HEK293 (cell line): ENCODE measurements at regions of chr9 and their contacts with region 1.

Region 1: GRCh38 chr9:12719431-12719830 is 26.2 kb downstream of the TYRP1 start:
- H3K4me3 ChIP-seq: no peak overlapping the region
- H3K27ac ChIP-seq: no peak overlapping the region
- H3K4me1 ChIP-seq: no peaks in the 10 kb centered on the region
- CTCF ChIP-seq: no peak

Region 2: DNA sequence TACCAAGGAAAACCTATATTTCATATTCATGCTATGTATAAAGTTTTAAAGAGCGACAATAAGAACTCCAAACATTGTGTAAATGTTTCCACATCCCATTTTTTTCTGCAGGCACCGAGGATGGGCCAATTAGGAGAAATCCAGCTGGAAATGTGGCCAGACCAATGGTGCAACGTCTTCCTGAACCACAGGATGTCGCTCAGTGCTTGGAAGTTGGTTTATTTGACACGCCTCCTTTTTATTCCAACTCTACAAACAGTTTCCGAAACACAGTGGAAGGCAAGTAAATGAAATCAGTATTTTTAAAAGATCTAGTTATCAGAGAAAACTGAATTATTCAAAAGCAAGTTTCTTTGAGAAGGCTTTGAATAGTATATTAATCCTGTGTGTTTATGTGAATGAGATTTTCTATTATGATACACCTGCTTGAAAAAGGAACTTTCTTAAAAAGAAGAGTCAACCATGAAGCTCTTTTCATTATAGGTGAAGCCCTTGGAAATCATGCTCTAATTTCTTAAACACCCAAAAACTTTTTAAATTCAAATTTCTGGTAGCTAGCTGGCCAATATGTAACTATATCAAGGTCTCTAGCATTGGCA is 17.2 kb before region 1 on chr9:
- CTCF ChIA-PET with region 1: interaction called, 24 read pairs
- POLR2A ChIA-PET with region 1: no interaction called
- H3K4me3 ChIP-seq: no peak overlapping the region
- H3K27ac ChIP-seq: no peak overlapping the region
- H3K4me1 ChIP-seq: peaks cover 13% of the 10 kb centered on the region
- CTCF ChIP-seq: peak; percentile 59

Region 3: GRCh38 chr9:12739014-12739652 is 19.7 kb after region 1 on chr9:
- CTCF ChIA-PET with region 1: interaction called, 16 read pairs
- POLR2A ChIA-PET with region 1: no interaction called
- H3K4me3 ChIP-seq: no peak overlapping the region
- H3K27ac ChIP-seq: no peak overlapping the region
- H3K4me1 ChIP-seq: 0 out of 2 replicates have a peak, but pooled peaks cover 2% of the 10 kb centered on the region
- CTCF ChIP-seq: no peak

Region 4: GRCh38 chr9:12884737-12885414 is 165.4 kb after region 1 on chr9:
- CTCF ChIA-PET with region 1: interaction called, 33 read pairs
- POLR2A ChIA-PET with region 1: no interaction called
- H3K4me3 ChIP-seq: no peak overlapping the region
- H3K27ac ChIP-seq: no peak overlapping the region
- H3K4me1 ChIP-seq: peaks cover 9% of the 10 kb centered on the region
- CTCF ChIP-seq: peak; percentile 85

Region 5: DNA sequence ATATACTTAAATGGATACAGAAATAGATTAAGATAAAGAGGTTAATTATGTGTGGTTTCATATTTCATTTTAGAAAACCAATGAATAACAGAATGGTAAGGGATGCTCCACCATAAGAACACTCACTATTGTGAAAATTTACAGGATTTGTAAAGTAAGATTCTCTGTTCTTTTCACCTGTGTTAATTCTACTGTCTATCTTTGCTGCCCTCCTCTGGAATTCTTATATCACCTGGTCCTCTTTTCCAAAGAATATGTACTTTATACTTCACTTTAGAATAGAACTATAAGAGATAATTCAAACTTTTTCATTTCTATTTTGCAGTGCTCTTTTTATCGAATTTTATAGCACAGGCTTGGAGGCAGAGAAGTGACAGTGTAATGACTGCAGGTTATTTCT is 268.8 kb after region 1 on chr9:
- CTCF ChIA-PET with region 1: no interaction called
- POLR2A ChIA-PET with region 1: no interaction called
- H3K4me3 ChIP-seq: no peak overlapping the region
- H3K27ac ChIP-seq: no peak overlapping the region
- H3K4me1 ChIP-seq: no peaks in the 10 kb centered on the region
- CTCF ChIP-seq: no peak

Region 6: GRCh38 chr9:13088720-13089427 is 369.4 kb after region 1 on chr9:
- CTCF ChIA-PET with region 1: interaction called, 21 read pairs
- POLR2A ChIA-PET with region 1: no interaction called
- H3K4me3 ChIP-seq: no peak overlapping the region
- H3K27ac ChIP-seq: no peak overlapping the region
- H3K4me1 ChIP-seq: no peaks in the 10 kb centered on the region
- CTCF ChIP-seq: 0 out of 2 replicates have a peak, but pooled peaks have one; percentile 22